ENCODE measurements at regions of chr6 and their contacts with region 1.

Region 1: GRCh38 chr6:107330168-107330567 is 129.2 kb downstream of the PDSS2 start:
- DNase-seq: peak; percentile 59
- ATAC-seq: peak; percentile 88
- H3K4me3 Mint-ChIP-seq: peak overlapping the region; percentile 30
- H3K27ac Mint-ChIP-seq: peak overlapping the region; percentile 63
- H3K4me1 Mint-ChIP-seq: peaks cover 13% of the 10 kb centered on the region
- H3K27me3 Mint-ChIP-seq: no peaks in the 10 kb centered on the region

Region 2: GRCh38 chr6:107318100-107318736 is 11.9 kb before region 1 on chr6:
- CTCF ChIA-PET with region 1: interaction called, 18 read pairs
- DNase-seq: peak; percentile 61
- ATAC-seq: peak; percentile 80
- H3K4me3 Mint-ChIP-seq: no peak overlapping the region
- H3K27ac Mint-ChIP-seq: no peak overlapping the region
- H3K4me1 Mint-ChIP-seq: peaks cover 7% of the 10 kb centered on the region
- H3K27me3 Mint-ChIP-seq: no peaks in the 10 kb centered on the region